Activated B cell treated with CpG ODN at 0.5 μM for 24 hours (primary cell): ENCODE measurements at regions of chrX and their contacts with region 1.

Region 1: DNA sequence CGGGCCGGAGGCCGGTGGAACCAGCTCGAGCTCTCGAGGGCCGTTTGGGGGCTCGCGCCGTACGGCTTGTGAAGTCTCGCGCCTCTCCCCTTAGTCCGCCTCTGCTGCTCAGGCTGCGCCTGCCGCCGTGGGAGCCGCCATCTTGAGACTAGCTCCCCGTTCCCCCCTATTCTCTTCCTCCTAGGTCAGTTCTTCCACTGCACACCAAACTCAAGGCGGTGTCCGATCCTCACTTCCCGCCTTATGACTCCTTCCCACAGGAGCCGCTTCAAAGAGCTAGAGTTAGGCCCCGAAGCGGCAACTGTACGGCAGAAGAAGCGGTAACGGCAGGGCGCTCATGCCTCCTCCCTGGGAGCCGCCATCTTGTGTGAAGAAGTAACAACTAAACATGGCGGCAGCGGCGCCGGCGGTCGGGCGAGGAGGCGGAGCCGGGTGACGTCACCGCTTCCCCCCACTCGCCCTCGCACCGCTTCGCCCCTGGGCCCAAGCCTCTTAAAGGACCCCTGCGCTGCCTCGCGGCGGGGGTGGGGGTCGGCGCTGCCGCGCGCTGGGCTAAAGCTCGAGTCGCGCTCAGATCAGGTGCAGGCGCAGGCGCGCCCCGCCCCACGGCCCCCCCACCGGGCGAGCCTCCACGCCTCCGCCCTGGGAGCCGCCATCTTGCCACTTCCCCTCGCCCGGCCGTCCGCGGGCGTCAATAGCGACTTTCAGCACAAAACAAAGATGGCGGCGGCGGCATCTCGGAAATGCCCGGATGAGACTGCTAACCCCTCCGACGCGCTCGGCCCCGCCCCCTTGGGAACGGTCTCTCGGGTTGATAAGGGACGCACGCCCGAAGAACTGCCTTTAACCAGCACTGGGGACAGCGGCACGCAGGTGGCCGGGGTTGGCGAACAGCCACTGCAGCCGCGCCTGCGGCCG is at the start of gene HCFC1:
- DNase-seq: peak; percentile 81
- ATAC-seq: peak; percentile 48
- H3K4me3 Mint-ChIP-seq: peak within 1 kb of the TSS; percentile 100
- H3K27ac Mint-ChIP-seq: peak within 1 kb of the TSS; percentile 100
- H3K4me1 Mint-ChIP-seq: peaks cover 44% of the 10 kb centered on the region
- H3K27me3 Mint-ChIP-seq: no peaks in the 10 kb centered on the region
- CTCF ChIP-seq: no peak
- total RNA-seq, gene HCFC1: 72.5 and 79.4 TPM in 2 replicates

Region 2: GRCh38 chrX:153216926-153217325 is 754.8 kb before region 1 on chrX:
- CTCF ChIA-PET with region 1: no interaction called
- POLR2A ChIA-PET with region 1: no interaction called
- intact Hi-C with region 1: no loop called
- DNase-seq: no peak
- ATAC-seq: no peak
- H3K4me3 Mint-ChIP-seq: no peak overlapping the region
- H3K27ac Mint-ChIP-seq: no peak overlapping the region
- H3K4me1 Mint-ChIP-seq: peaks cover 6% of the 10 kb centered on the region
- H3K27me3 Mint-ChIP-seq: peaks cover 4% of the 10 kb centered on the region
- CTCF ChIP-seq: no peak

Region 3: GRCh38 chrX:153794018-153794896 is 177.5 kb before region 1 on chrX and contains the starts of genes IDH3G and SSR4:
- CTCF ChIA-PET with region 1: no interaction called
- POLR2A ChIA-PET with region 1: interaction called, 8 read pairs
- intact Hi-C with region 1: loop called (anchors 1 kb)
- DNase-seq: peak; percentile 84
- ATAC-seq: peak; percentile 91
- H3K4me3 Mint-ChIP-seq: peak within 1 kb of the TSS; percentile 94
- H3K27ac Mint-ChIP-seq: peak within 1 kb of the TSS; percentile 92
- H3K4me1 Mint-ChIP-seq: peaks cover 19% of the 10 kb centered on the region
- H3K27me3 Mint-ChIP-seq: no peaks in the 10 kb centered on the region
- CTCF ChIP-seq: no peak
- total RNA-seq, gene IDH3G: 58.5 and 60.3 TPM in 2 replicates
- total RNA-seq, gene SSR4: 160 and 175 TPM in 2 replicates

Region 4: GRCh38 chrX:153953342-153953830 is 18.3 kb before region 1 on chrX:
- CTCF ChIA-PET with region 1: interaction called, 3 read pairs
- POLR2A ChIA-PET with region 1: interaction called, 3 read pairs
- intact Hi-C with region 1: loop called (anchors 2 kb)
- DNase-seq: peak; percentile 68
- ATAC-seq: peak; percentile 88
- H3K4me3 Mint-ChIP-seq: no peak overlapping the region
- H3K27ac Mint-ChIP-seq: peak overlapping the region; percentile 46
- H3K4me1 Mint-ChIP-seq: peaks cover 2% of the 10 kb centered on the region
- H3K27me3 Mint-ChIP-seq: no peaks in the 10 kb centered on the region
- CTCF ChIP-seq: no peak

Region 5: GRCh38 chrX:154013614-154014360 is 42.1 kb after region 1 on chrX:
- CTCF ChIA-PET with region 1: interaction called, 6 read pairs
- POLR2A ChIA-PET with region 1: interaction called, 36 read pairs
- intact Hi-C with region 1: loop called (anchors 2 kb)
- DNase-seq: peak; percentile 32
- ATAC-seq: peak; percentile 76
- H3K4me3 Mint-ChIP-seq: no peak overlapping the region
- H3K27ac Mint-ChIP-seq: peak overlapping the region; percentile 35
- H3K4me1 Mint-ChIP-seq: peaks cover 31% of the 10 kb centered on the region
- H3K27me3 Mint-ChIP-seq: no peaks in the 10 kb centered on the region
- CTCF ChIP-seq: no peak

Region 6: DNA sequence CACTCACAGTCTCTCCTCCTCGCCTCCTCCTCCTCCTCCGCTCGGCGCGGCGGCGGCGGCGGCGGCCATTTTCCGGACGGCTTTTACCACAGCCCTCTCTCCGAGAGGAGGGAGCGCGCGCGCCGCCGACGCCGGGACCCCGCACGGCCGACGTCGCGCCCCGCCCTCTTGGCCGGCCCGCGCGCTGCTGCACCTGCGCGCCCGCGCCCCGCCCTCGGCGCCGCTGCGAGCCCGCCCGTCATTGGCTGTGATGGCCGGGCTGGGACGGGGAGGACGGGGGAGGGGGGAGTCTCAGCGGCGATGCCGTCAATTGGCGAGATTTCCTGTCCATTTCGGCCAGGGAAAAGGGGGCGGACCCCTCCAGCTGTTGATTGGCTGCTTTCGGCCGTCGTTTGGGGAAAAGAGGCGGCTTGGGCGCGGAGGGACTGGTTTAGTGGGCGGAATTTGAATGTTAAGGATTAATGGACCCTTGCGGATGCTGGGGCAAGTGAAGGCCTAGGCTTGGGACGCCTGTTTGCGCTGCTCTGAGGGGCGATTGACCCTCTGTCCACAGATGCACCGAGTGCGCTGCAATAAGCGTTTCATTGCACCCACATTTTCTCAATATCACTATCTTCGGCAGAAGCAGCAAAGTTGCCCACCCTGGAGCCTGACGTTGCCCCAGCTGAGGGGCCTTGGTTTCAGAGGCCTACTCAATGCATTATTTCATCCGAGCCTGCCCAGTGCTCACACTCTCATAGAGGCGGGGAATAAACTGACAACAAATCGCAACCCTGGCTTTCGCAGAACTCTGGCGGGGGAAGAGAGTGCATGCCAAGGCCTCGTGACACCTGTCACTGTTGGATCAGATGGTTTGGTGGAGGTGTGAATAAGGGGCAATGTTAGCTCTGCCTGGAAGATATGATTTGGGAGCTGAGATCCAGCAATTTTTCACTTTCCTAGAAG is 126.2 kb after region 1 on chrX and contains the start of gene MECP2:
- CTCF ChIA-PET with region 1: no interaction called
- POLR2A ChIA-PET with region 1: no interaction called
- intact Hi-C with region 1: loop called (anchors 2 kb)
- DNase-seq: peak; percentile 75
- ATAC-seq: peak; percentile 93
- H3K4me3 Mint-ChIP-seq: peak within 1 kb of the TSS; percentile 90
- H3K27ac Mint-ChIP-seq: peak within 1 kb of the TSS; percentile 85
- H3K4me1 Mint-ChIP-seq: peaks cover 39% of the 10 kb centered on the region
- H3K27me3 Mint-ChIP-seq: peaks cover 2% of the 10 kb centered on the region
- CTCF ChIP-seq: no peak
- total RNA-seq, gene MECP2: 56.8 and 69.0 TPM in 2 replicates

Region 7: DNA sequence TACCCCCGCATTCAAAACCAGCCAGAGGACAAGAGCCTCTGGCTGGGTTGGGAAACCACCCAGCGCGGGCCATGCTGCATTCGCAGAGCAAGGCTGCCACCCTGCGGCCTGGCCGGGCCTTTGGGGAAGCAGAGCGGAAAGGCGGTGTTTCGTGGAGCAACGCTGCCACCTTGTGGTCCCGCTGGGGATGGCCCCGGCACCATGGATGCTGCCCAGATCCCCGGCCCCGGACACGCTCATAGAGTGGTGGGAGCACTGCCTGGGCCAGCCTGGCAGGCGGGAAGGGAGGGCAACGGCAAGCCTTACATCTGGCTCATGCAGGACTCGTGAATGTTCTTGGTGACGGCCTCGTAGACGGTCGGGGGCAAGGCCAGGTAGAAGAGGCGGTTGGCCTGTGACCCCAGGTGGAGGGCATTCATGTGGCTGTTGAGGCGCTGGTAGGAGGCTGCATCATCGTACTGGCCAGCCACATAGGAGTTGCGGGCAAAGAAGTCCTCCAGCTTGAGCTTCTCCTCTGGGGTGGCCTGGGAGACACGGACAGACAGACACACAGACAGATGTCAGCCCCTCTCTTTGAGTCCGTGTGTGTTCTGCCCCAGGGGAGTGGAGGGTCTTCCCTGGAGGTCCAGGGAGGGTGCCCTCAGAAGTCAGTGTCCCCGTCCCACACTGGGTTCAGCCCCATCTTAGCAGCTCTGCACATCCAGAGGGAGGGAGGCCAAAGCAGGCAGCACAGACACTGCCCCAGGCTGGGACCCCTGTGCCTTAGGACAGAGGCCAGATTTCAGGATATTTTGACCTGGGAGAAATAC is 563.4 kb after region 1 on chrX:
- CTCF ChIA-PET with region 1: no interaction called
- POLR2A ChIA-PET with region 1: no interaction called
- intact Hi-C with region 1: loop called (anchors 2 kb)
- DNase-seq: peak; percentile 77
- ATAC-seq: peak; percentile 96
- H3K4me3 Mint-ChIP-seq: no peak overlapping the region
- H3K27ac Mint-ChIP-seq: peak overlapping the region; percentile 50
- H3K4me1 Mint-ChIP-seq: peaks cover 3% of the 10 kb centered on the region
- H3K27me3 Mint-ChIP-seq: no peaks in the 10 kb centered on the region
- CTCF ChIP-seq: peak; percentile 30